Ascending aorta (tissue), 2 donors: ENCODE measurements at regions of chr17 and their contacts with region 1.

Region 1: GRCh38 chr17:82876602-82877379 is 37.0 kb upstream of the ZNF750 start:
- DNase-seq: peak; percentile 47 to 87
- H3K4me3 ChIP-seq: no peak overlapping the region
- H3K27ac ChIP-seq: peak overlapping the region; percentile 43 to 45
- H3K4me1 ChIP-seq: peaks cover 0 to 10% of the 10 kb centered on the region in 2 donors
- H3K27me3 ChIP-seq: no peaks in the 10 kb centered on the region
- CTCF ChIP-seq: peak; percentile 23 to 62 (median 58)

Region 2: GRCh38 chr17:82859431-82860403 is 17.1 kb before region 1 on chr17:
- intact Hi-C with region 1: no loop called
- DNase-seq: no peak
- H3K4me3 ChIP-seq: no peak overlapping the region
- H3K27ac ChIP-seq: peak overlapping the region in 1 of 2 donors; percentile 31
- H3K4me1 ChIP-seq: no peaks in the 10 kb centered on the region
- H3K27me3 ChIP-seq: no peaks in the 10 kb centered on the region
- CTCF ChIP-seq: no peak

Region 3: GRCh38 chr17:82917691-82918345 is 41.0 kb after region 1 on chr17:
- intact Hi-C with region 1: loop called (anchors 5 kb)
- DNase-seq: no peak
- H3K4me3 ChIP-seq: no peak overlapping the region
- H3K27ac ChIP-seq: no peak overlapping the region
- H3K4me1 ChIP-seq: no peaks in the 10 kb centered on the region
- H3K27me3 ChIP-seq: no peaks in the 10 kb centered on the region
- CTCF ChIP-seq: no peak